ENCODE measurements at regions of chr15 and their contacts with region 1.

Region 1: DNA sequence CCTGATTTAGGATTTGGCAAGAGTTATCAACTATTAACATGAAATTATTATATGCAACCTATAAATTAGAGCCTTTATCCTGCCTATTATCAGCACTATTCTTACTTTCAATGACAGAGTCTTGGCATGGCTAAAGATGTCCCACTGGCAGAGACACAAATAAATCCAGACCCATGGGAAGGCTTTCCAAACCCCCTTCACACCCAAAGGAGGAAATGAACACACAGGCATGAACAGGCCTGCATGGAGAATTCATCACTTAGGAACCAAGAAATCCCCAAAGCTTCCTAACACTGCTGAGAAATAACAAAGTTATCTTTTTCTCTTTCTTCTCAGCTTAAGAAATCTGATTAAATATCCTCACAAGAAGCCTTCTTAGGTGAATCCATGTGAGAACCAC is 213.9 kb downstream of the OCA2 start:
- DNase-seq: no peak
- H3K4me3 ChIP-seq: no peak overlapping the region
- H3K27ac ChIP-seq: no peak overlapping the region
- H3K4me1 ChIP-seq: no peaks in the 10 kb centered on the region
- H3K27me3 ChIP-seq: no peaks in the 10 kb centered on the region
- CTCF ChIP-seq: no peak
- POLR2A ChIP-seq: no peak

Region 2: GRCh38 chr15:27679731-27680471 is 205.3 kb before region 1 on chr15:
- intact Hi-C with region 1: no loop called
- DNase-seq: no peak
- H3K4me3 ChIP-seq: no peak overlapping the region
- H3K27ac ChIP-seq: no peak overlapping the region
- H3K4me1 ChIP-seq: no peaks in the 10 kb centered on the region
- H3K27me3 ChIP-seq: no peaks in the 10 kb centered on the region
- CTCF ChIP-seq: no peak
- POLR2A ChIP-seq: no peak

Region 3: GRCh38 chr15:27949089-27949488 is 63.9 kb after region 1 on chr15:
- intact Hi-C with region 1: loop called (anchors 10 kb)
- DNase-seq: no peak
- H3K4me3 ChIP-seq: no peak overlapping the region
- H3K27ac ChIP-seq: no peak overlapping the region
- H3K4me1 ChIP-seq: no peaks in the 10 kb centered on the region
- H3K27me3 ChIP-seq: no peaks in the 10 kb centered on the region
- CTCF ChIP-seq: no peak
- POLR2A ChIP-seq: no peak